Left lung (tissue), 14 donors: ENCODE measurements at regions of chr12 and their contacts with region 1.

Region 1: DNA sequence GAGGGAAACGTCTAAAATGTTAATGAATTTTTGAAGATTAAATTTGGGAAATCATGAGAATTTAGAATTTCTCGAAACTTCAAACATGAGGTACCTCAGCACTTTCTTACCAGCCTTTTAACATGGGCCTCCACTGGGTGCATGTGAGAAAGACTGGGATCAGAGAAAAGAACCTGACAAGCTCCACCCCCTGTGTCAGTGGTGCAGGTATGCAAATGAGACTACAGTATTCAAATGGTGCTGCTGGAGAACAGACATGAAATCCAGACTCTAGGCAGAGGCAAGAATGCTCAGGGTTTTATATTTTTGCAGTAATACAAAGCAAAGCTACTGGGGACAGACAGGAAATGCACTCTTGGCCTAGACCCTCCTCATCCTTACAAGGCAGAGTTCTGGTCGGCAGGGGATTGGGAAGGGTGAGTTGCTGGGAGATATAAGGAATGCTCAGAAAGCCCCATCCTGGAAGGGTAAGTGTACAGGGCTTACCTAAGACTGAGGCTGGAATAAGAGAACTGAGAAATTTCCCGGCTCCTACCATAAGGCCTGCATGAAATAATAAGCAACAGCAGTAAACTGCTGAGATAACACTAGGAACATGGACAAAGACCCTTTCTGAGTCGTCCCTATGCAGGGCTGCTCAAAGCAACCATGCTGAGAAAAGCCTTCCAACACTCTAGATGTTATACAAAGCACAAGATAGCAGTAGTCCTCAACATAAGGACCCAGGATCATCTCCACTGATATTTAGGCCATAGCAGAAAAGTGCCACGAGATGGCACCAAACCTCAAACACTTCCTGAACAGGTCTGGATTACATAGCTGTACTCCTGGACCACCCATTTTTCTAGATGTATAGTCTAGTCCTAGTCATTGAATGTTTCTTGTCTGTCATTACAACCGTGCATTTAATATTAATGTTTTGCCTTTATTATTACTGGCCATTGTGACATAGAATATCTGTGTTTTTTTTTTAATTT is 260.8 kb downstream of the RASSF9 start:
- DNase-seq: peak in 2 of 4 donors; percentile 32 to 66
- ATAC-seq: peak; percentile 89
- H3K4me3 ChIP-seq: no peak overlapping the region
- H3K27ac ChIP-seq: no peak overlapping the region
- H3K4me1 ChIP-seq: no peaks in the 10 kb centered on the region
- H3K27me3 ChIP-seq: no peaks in the 10 kb centered on the region
- CTCF ChIP-seq: peak; percentile 40 to 57

Region 2: DNA sequence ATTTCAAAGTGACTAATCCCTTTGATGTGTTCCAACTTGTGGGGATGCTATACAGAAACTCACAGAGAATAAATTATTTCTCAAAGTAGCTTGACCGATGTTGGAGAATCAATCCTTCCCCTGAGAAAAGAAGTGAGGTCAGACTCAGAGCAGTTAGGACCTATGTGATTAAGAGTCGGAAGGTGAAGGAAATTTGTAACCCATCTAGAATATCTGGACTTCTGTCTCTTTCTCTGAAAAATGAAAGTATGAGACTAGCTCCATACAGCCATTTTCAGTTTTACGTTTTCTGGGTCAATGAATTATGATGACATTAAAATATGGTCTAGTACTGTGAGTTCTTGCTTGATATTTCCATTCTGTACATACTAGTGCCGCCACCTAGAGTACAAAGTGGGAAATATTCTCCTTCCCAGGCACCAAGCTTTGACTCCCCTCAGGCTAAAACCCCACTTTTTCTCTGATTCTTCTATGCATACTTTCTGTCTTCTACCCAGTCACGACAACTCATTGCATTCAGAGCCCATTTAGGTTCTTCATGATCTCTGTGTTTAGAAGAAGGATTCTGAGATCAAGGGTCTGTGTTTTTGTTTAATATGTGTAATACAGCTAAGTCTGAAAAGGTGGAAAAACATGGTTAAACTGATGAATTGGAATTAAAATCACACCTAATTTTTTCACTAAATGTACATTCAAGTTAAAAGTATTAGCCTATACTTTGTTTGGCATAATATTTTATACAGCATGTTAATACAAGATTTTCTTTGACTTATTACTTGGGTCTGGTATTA is 291.8 kb after region 1 on chr12:
- intact Hi-C with region 1: loop called in 1 of 2 experiments (anchors 10 kb)
- DNase-seq: peak in 2 of 4 donors; percentile 52 to 65
- ATAC-seq: peak; percentile 97
- H3K4me3 ChIP-seq: no peak overlapping the region
- H3K27ac ChIP-seq: no peak overlapping the region
- H3K4me1 ChIP-seq: no peaks in the 10 kb centered on the region
- H3K27me3 ChIP-seq: no peaks in the 10 kb centered on the region
- CTCF ChIP-seq: peak; percentile 61 to 89